GM13977 (cell line): ENCODE measurements at regions of chr6 and their contacts with region 1.

Region 1: GRCh38 chr6:33788694-33789549 is at the start of gene LEMD2:
- DNase-seq: peak; percentile 98
- CTCF ChIP-seq: no peak

Region 2: GRCh38 chr6:33905071-33905609 is 116.2 kb after region 1 on chr6:
- in situ Hi-C with region 1: no loop called
- DNase-seq: no peak
- CTCF ChIP-seq: no peak

Region 3: GRCh38 chr6:34027445-34027936 is 238.6 kb after region 1 on chr6:
- in situ Hi-C with region 1: loop called (anchors 25 kb)
- DNase-seq: peak; percentile 82
- CTCF ChIP-seq: peak; percentile 80

Region 4: DNA sequence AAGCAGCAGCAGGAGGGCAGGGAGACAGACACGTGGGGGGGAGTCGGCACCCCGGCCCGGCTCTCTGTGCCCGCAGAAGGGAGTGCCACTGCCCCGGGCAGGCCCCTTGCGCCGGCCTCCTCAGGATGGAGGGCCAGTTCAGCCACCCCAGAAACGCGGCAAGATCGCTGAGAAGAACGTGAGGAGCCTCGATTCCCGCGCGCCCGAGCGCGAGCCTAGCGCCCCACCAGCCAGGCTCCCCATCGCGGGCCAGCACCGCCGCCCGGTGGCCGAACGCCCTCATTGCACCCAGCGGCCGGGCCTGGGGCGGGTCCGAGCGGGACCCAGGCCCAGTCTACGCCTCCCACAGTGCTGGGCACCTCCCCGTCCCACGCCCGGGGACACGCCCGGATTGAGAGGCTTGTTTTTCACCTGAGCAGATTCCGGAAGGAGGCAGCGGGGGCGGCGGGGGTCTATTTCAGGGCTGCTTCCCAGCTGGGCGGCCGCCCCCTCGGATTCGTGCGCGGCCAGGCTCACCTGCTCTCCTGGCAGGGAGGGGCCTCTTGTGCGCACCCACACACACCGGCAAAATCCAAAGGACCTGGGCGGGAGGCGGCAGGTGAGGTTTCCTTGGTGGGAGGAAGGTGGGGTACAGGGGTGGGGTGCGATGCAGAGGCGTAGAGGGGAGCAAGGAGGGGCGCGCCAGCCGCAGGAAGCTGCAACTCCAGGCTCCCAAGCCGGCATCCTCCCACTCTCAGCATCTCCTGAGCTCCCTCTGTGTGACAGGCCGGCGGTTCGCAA is 365.9 kb after region 1 on chr6:
- in situ Hi-C with region 1: loop called (anchors 10 kb)
- DNase-seq: peak; percentile 93
- CTCF ChIP-seq: peak; percentile 99